PC-3 (cell line): ENCODE measurements at regions of chr1 and their contacts with region 1.

Region 1: GRCh38 chr1:212990276-212990675 is 25.4 kb downstream of the ANGEL2 start:
- DNase-seq: no peak
- ATAC-seq: no peak
- H3K4me3 ChIP-seq: no peak overlapping the region
- H3K27ac ChIP-seq: no peak overlapping the region
- H3K4me1 ChIP-seq: peaks cover 12% of the 10 kb centered on the region
- H3K27me3 ChIP-seq: no peaks in the 10 kb centered on the region
- CTCF ChIP-seq: no peak

Region 2: DNA sequence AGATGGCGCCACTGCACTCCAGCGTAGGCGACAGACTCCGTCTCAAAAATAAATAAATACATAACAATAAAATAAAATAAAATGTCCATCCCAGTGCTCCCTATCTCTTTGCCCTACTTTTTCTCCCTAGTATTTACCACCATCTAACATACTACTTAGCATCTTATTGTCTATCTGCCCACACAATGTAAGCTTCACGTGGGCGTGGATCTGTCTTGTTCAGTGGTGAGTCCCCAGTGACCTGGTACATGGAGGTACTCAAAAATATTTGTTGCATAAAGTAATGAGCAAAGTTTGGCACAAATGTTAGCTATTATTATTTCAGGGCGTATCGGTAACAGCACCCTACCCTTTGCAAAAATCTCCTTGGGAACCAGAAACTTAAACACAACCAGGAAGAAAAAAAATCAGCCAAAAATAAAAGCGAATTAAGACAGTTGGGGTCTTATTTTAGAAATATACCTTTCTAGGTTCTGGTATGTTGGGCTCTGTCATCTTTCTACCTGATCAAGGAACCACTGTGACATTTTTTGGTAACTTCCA is 558.0 kb before region 1 on chr1:
- CTCF ChIA-PET with region 1: no interaction called
- POLR2A ChIA-PET with region 1: no interaction called
- intact Hi-C with region 1: no loop called
- DNase-seq: no peak
- ATAC-seq: no peak; the same call in 1 of the 2 replicates
- H3K4me3 ChIP-seq: peak overlapping the region; percentile 62
- H3K27ac ChIP-seq: no peak overlapping the region
- H3K4me1 ChIP-seq: peaks cover 23% of the 10 kb centered on the region
- H3K27me3 ChIP-seq: no peaks in the 10 kb centered on the region
- CTCF ChIP-seq: no peak

Region 3: DNA sequence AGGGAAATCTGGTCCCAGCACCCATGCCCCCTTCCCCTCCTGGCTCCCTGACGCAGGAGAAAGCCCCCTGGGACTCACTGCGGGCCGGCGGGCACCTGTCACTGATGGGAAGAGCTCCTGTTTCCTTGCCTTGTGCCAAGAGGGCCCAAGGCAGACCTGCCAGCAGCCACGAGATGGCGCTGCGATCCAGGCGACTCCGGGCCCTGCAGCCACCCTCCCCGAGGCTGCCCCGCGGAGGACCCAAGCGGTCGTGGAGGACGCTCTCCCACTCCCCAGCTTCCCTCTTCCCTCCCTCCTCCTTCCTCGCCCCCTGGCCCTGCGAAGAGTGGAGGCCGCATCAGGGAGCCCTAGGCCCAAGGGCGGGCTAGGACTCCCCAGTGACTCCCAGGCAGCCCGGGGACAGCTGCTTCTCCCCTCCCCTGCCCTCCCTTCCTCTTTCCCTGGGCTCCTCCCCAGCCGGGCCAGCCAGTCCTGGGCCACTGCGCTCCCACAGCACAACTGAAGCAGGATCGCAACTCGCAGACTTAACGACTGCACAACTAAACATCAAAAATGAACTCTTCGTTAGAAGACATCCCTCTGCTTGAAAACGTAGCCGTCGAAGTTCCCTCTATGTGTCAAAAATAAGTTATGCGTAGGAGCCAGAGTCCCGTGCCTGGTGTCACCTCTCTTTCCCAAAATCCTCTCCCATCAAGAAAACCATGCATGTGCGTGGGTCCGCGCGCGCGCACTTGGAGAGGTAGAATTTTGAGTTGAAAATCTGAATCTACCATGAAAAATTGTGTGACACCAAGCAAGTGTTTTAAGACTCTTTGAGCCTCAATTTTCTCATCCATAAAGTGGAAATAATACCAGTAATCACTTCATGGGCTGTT is 324.8 kb before region 1 on chr1:
- CTCF ChIA-PET with region 1: no interaction called
- POLR2A ChIA-PET with region 1: no interaction called
- intact Hi-C with region 1: loop called (anchors 1 kb)
- DNase-seq: peak; percentile 95
- ATAC-seq: peak; percentile 88
- H3K4me3 ChIP-seq: peak overlapping the region; percentile 72
- H3K27ac ChIP-seq: no peak overlapping the region; the same call in 1 of the 2 replicates
- H3K4me1 ChIP-seq: peaks cover 35% of the 10 kb centered on the region
- H3K27me3 ChIP-seq: no peaks in the 10 kb centered on the region
- CTCF ChIP-seq: peak; percentile 99

Region 4: DNA sequence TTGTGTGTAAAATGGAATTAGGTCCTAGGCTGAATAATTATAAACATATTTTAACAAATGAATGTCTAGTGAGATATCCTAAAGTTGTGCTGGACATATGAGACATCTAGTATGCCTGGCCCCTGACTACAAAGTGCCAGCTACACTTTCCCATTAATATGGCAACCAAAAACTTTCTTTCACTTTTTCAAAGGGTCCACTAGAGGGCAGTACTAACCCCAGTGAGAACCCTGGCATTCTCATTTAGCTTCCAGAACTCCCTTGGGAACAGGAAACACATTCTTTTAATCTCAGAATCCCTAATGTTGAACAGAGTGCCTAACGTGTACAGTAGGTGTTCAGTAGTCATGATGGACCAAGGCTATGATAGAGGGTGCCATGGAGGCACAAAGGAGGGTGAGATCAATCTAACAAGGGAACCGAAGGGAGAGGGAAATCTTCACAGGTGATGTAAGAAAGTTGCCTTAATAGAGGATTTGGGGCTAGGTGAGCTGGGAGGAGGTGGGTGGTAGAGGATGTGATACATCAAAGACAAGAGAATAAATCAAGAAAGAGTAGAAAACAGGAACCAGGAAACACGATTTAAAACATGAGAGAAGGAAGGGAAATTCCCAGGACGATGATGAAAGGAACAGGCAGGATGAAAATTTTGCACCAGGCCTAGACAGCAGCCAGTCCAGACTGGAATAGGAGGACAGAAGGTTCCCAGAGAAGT is 240.3 kb before region 1 on chr1:
- CTCF ChIA-PET with region 1: interaction called, 4 read pairs
- POLR2A ChIA-PET with region 1: no interaction called
- intact Hi-C with region 1: loop called (anchors 2 kb)
- DNase-seq: peak; percentile 80
- ATAC-seq: peak; percentile 76
- H3K4me3 ChIP-seq: no peak overlapping the region
- H3K27ac ChIP-seq: no peak overlapping the region
- H3K4me1 ChIP-seq: no peaks in the 10 kb centered on the region
- H3K27me3 ChIP-seq: no peaks in the 10 kb centered on the region
- CTCF ChIP-seq: peak; percentile 93

Region 5: DNA sequence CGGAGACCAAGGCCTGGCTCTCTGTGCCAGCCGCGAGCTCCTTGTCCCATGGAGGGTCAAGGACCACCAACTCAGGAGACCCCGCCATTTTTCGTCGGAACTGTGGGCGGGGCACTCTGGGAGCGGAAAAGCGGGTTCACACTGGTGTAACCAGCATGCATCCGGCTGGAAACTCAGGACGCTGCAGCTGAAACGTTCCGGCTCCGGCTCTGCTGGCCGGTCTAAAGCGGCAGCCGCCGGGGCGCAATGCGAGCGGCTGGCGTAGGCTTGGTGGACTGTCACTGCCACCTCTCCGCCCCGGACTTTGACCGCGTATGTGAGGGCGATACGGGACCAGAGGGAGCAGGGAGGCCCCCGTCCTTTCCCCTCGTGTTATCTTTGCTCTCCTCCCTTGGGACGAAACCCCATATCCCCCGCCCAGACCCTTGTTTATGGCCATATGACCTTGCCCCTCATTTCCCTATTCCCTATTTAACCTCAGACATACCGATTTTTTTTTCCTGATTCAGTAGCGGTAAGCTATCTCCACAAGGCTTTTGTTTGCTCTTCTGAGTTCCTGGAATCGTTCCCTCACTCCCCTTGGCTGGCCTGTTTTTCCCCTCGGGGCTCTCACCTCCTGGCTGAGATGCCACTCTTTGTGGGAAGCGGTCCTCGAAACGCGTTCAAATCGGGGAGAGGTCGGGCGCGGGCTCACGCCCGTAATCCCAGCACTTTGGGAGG is 198.4 kb before region 1 on chr1 and contains the starts of genes NSL1 and TATDN3:
- CTCF ChIA-PET with region 1: no interaction called
- POLR2A ChIA-PET with region 1: no interaction called
- intact Hi-C with region 1: loop called (anchors 1 kb)
- DNase-seq: peak; percentile 99
- ATAC-seq: peak; percentile 92
- H3K4me3 ChIP-seq: peak within 1 kb of the TSS; percentile 87
- H3K27ac ChIP-seq: peak within 1 kb of the TSS; percentile 62
- H3K4me1 ChIP-seq: peaks cover 5% of the 10 kb centered on the region; the same call in 1 of the 2 replicates
- H3K27me3 ChIP-seq: no peaks in the 10 kb centered on the region
- CTCF ChIP-seq: no peak
- total RNA-seq, gene NSL1: 37.3 and 56.1 TPM in 2 replicates
- total RNA-seq, gene TATDN3: 8.8 and 12.7 TPM in 2 replicates

Region 6: GRCh38 chr1:212816567-212817278 is 173.6 kb before region 1 on chr1:
- CTCF ChIA-PET with region 1: no interaction called
- POLR2A ChIA-PET with region 1: no interaction called
- intact Hi-C with region 1: loop called (anchors 2 kb)
- DNase-seq: peak; percentile 33
- ATAC-seq: peak; percentile 79
- H3K4me3 ChIP-seq: no peak overlapping the region
- H3K27ac ChIP-seq: no peak overlapping the region
- H3K4me1 ChIP-seq: peaks cover 11% of the 10 kb centered on the region
- H3K27me3 ChIP-seq: no peaks in the 10 kb centered on the region
- CTCF ChIP-seq: no peak

Region 7: GRCh38 chr1:213070406-213070805 is 80.1 kb after region 1 on chr1:
- CTCF ChIA-PET with region 1: no interaction called
- POLR2A ChIA-PET with region 1: no interaction called
- intact Hi-C with region 1: loop called (anchors 1 kb)
- DNase-seq: peak; percentile 75
- ATAC-seq: peak; percentile 96
- H3K4me3 ChIP-seq: no peak overlapping the region
- H3K27ac ChIP-seq: no peak overlapping the region
- H3K4me1 ChIP-seq: peaks cover 4% of the 10 kb centered on the region; the same call in 1 of the 2 replicates
- H3K27me3 ChIP-seq: no peaks in the 10 kb centered on the region
- CTCF ChIP-seq: peak; percentile 61

Region 8: DNA sequence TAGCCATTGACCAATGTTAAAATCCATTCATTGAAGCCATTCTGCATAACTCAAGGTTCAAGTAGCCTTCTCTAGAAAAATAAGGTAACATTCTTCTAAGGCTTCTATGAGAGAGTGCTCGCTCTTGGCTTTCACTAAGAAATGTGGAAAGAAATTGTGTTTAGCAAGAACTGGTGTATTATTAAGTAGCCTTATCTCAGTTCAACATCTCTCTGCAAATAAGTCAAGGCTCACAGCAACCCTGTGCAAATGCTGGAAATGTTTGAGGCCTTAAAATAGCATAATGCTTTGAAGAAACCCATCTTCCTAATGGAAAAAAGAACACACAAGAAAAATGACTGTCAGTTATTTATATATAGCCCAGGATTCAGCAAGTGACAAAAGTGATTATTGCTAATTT is 743.4 kb after region 1 on chr1:
- CTCF ChIA-PET with region 1: no interaction called
- POLR2A ChIA-PET with region 1: no interaction called
- intact Hi-C with region 1: no loop called
- DNase-seq: no peak
- ATAC-seq: no peak
- H3K4me3 ChIP-seq: no peak overlapping the region
- H3K27ac ChIP-seq: no peak overlapping the region
- H3K4me1 ChIP-seq: no peaks in the 10 kb centered on the region
- H3K27me3 ChIP-seq: peaks cover 33% of the 10 kb centered on the region
- CTCF ChIP-seq: no peak